Activated naive CD4-positive, alpha-beta T cell treated with anti-CD3 and anti-CD28 coated beads for 36 hours (primary cell): ENCODE measurements at regions of chr16 and their contacts with region 1.

Region 1: DNA sequence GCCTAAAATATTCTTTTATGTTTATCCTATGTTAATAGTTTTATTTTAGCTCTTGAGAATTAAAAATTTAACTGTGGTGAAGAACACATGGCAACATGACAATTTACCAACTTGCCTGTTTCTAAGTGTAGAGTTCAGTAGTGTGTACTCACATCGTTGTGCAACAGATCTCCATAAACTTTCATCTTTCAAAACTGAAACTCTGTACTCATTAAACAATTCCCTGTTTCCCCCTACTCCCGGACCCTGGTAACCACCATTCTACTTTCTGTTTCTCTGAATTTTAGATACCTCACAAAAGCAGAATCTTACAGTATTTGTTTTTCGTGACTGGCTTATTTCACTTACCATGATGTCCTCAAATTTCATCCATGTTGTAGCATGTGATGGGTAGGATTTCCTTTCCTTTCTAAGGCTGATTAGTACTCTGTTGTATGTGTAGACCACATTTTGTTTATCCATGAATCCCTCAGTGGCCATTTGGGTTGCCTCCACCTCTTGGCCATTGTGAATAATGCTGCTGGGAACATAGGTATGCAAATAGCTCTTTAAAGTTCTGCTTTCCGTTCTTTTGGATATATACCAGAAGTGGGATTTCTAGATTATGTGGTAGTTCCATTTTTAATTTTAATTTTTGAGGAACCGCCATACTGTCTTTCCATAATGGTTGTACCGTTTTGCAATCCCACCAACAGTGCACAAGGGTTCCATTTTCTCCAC is 17.4 kb downstream of the IST1 start:
- DNase-seq: no peak
- H3K4me3 Mint-ChIP-seq: no peak overlapping the region
- H3K27ac Mint-ChIP-seq: peak overlapping the region; percentile 35
- H3K4me1 Mint-ChIP-seq: peaks cover 71% of the 10 kb centered on the region
- H3K27me3 Mint-ChIP-seq: no peaks in the 10 kb centered on the region

Region 2: DNA sequence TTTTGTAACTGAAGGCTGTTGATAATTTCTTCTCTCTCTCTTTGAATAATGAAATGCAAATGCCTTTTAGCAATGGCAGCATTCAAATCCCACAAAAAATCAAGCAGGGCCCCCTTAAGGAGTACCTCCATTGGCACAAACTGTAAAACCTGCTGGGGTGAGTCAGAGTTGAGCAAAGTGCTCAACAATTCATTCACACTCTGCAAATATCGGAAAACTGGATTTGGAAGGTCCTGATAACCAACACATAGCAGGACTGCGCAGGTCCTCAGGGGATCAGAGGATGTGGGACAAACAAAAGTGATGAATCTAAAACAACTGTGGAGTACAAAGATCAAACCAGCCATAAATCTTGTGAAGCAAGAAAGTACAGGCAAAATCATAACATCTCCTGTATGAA is 629.1 kb before region 1 on chr16:
- CTCF ChIA-PET with region 1: interaction called, 10 read pairs
- intact Hi-C with region 1: no loop called
- DNase-seq: no peak
- H3K4me3 Mint-ChIP-seq: no peak overlapping the region
- H3K27ac Mint-ChIP-seq: no peak overlapping the region
- H3K4me1 Mint-ChIP-seq: peaks cover 12% of the 10 kb centered on the region
- H3K27me3 Mint-ChIP-seq: no peaks in the 10 kb centered on the region